ENCODE measurements at regions of chr1 and their contacts with region 1.

Region 1: GRCh38 chr1:41492341-41492848 is 7.9 kb upstream of the EDN2 start:
- DNase-seq: no peak
- H3K4me3 ChIP-seq: no peak overlapping the region
- H3K27ac ChIP-seq: peak overlapping the region; percentile 41
- H3K4me1 ChIP-seq: peaks cover 46% of the 10 kb centered on the region
- H3K27me3 ChIP-seq: no peaks in the 10 kb centered on the region
- CTCF ChIP-seq: peak; percentile 64 to 76

Region 2: DNA sequence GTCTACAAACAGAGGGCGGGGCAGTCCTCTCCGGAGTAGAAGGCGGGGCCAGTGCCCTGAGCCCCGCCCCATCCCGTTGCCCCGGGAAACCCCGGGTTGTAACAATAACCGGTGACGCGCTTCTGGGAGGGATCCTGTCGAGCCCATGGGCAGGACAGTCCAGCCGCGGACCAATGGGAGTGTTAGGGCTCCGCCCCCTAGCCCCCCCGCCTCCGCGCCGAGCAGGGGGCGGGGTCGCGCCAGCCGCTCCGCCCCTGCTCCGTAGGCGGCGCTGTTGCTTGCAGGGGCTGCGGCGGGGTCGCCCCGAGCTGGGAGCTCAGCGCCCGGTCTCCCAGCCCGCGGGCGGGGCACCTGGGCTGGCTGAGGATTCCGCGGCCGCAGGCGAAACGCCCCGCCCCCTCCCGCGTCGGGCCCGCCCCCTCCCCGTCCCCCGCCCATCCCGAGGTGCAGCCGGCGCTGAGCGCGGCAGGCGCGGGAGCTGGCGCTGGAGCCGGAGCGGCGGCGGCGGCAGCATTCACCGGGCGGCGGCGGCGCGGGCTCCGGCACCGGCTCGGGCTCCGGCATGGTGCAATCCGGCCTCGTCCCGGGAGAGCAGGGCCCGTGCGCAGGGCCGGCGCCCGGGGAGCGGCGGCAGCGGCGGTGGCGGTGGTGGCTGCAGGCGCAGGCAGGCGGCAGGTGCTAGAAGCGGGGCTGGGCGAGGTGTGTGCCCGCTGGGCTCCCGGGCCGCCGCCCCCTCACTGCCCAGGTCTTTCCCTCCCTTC is 131.2 kb before region 1 on chr1 and contains the start of gene FOXO6:
- CTCF ChIA-PET with region 1: no interaction called
- dilution Hi-C with region 1: no loop called
- in situ Hi-C with region 1: no loop called
- intact Hi-C with region 1: loop called (anchors 1 kb)
- DNase-seq: peak; percentile 95
- H3K4me3 ChIP-seq: peak within 1 kb of the TSS in 2 of 3 experiments; percentile 46 to 54
- H3K27ac ChIP-seq: peak within 1 kb of the TSS; percentile 45
- H3K4me1 ChIP-seq: peaks cover 42% of the 10 kb centered on the region
- H3K27me3 ChIP-seq: peaks cover 12% of the 10 kb centered on the region
- CTCF ChIP-seq: peak in 1 of 2 donors; percentile 22
- total RNA-seq, gene FOXO6: 0.28 to 0.67 TPM

Region 3: DNA sequence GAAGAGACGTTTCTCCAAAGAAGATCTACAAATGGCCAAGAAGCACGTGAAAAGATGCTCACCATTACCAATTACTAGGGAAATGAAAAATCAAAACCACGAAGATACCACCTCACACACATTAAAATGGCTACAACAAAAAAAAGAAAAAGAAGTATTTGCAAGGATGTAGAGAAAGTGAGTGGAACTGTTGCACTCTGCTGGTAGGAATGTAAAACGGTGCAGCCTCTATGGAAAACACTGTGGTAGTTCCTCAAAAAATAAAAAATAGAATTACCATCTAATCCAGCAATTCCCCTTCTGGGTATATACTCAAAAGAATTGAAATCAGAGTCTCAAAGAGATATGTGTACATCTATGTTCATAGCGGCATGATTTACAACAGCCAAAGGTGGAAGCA is 107.5 kb after region 1 on chr1:
- CTCF ChIA-PET with region 1: no interaction called
- dilution Hi-C with region 1: no loop called
- in situ Hi-C with region 1: no loop called
- intact Hi-C with region 1: no loop called
- DNase-seq: no peak
- H3K4me3 ChIP-seq: no peak overlapping the region
- H3K27ac ChIP-seq: no peak overlapping the region
- H3K4me1 ChIP-seq: no peaks in the 10 kb centered on the region
- H3K27me3 ChIP-seq: no peaks in the 10 kb centered on the region
- CTCF ChIP-seq: peak; percentile 63 to 66

Measured in mammary epithelial cell (primary cell).